ENCODE measurements at regions of chr1 and their contacts with region 1.

Region 1: DNA sequence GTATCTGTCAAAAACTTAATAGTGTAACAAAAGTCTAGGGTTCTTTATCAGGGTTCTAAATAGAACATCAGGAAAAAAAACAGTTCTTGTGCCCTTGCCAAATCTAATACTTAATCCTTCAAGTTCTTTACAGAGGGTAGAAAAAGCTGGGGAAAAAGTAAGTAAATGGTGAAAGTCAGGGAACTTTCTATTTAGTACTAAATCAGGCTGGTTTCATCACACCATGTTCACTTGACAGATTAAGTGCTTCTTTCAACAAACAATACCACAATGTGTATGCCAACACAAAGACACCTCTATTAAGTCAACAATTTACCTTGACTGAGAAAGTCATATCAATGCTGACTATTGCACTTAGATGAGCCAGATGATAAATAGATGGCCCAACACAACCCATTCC is 9.7 kb downstream of the DBT start:
- DNase-seq: no peak
- H3K4me3 ChIP-seq: no peak overlapping the region
- H3K27ac ChIP-seq: no peak overlapping the region
- H3K4me1 ChIP-seq: peaks cover 5% of the 10 kb centered on the region
- H3K27me3 ChIP-seq: no peaks in the 10 kb centered on the region
- CTCF ChIP-seq: no peak

Region 2: DNA sequence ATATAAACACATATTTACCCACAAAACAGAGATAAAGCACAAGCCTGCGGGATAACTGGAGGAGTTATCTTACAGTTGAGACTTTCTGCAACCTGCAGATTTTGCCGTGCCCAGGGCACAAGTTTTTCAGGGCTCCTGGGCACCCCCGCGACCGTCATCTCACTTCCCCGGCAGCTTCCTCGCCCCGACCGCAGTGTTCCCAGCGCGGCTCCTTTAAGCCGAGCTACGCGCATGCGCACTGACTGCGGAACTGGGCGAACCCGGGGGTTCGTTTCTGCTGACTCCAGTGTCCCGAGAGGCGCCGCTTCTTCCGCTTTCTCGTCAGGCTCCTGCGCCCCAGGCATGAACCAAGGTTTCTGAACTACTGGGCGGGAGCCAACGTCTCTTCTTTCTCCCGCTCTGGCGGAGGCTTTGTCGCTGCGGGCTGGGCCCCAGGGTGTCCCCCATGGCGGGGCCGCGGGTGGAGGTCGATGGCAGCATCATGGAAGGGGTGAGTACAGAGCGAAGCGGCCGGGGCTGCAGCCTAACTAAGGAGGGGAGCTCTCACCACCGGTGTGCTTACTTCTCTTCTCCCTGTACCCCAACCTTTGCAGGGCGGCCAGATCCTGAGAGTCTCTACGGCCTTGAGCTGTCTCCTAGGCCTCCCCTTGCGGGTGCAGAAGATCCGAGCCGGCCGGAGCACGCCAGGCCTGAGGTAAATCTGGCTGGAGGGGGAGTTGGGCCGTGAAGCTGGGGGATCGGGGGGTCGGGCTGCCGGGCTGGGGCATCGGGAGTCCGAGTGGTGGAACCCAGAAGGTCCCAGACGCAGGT is 26.2 kb after region 1 on chr1 and contains the start of gene RTCA:
- CTCF ChIA-PET with region 1: no interaction called
- POLR2A ChIA-PET with region 1: interaction called, 18 read pairs
- intact Hi-C with region 1: no loop called
- DNase-seq: peak; percentile 98
- H3K4me3 ChIP-seq: peak within 1 kb of the TSS; percentile 93
- H3K27ac ChIP-seq: peak within 1 kb of the TSS; percentile 91
- H3K4me1 ChIP-seq: no peaks in the 10 kb centered on the region
- H3K27me3 ChIP-seq: no peaks in the 10 kb centered on the region
- CTCF ChIP-seq: no peak
- total RNA-seq, gene RTCA: 45.4 and 57.7 TPM in 2 replicates

Measured in A673 (cell line).